Calu3 (cell line): ENCODE measurements at regions of chr1 and their contacts with region 1.

Region 1: DNA sequence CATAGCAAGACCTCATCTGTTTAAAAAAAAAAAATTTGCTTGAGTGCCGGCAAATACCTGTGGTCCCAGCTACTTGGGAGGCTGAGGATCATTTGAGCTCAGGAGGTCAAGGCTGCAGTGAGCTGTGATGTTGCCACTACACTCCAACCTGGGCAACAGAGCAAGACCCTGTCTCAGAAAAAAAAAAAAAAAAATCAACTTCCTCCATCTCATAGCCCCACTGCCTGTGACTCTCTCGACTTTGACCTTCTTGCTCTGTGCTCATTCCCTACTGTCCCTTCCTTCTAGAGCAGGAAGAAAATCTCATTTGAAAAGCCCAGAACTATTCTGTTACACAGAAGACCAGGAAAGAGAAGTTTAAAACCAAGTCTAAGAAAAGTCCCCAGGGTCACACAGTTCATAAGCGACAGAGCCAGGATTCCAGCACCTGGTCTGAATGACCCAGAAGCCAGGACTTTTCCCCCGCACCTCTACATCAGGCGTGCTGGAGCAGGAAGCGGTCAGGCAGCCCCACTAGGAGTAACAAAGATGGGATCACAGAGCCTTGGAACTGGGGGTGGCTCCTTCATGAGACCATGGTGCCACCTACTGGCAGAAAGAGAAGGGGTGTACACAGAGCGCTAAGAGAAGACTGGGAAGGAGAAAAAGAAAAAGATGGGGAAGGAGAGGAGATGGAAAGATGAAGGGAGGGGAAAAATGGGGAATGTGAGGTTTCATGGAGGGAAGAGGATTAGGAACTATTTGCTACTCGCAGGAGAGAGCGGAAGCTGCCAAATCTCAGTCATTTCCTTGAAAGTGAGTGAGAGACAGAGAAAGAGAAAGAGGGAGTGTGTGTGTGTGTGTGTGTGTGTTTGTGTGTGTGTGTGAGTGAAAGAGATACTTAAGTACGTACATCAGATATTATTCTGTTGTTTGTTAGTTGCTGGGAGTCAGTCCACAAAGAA is 3.1 kb upstream of the P3R3URF start:
- DNase-seq: peak; percentile 88
- H3K4me3 Mint-ChIP-seq: no peak overlapping the region
- H3K27ac Mint-ChIP-seq: no peak overlapping the region
- H3K4me1 Mint-ChIP-seq: peaks cover 6% of the 10 kb centered on the region
- H3K27me3 Mint-ChIP-seq: no peaks in the 10 kb centered on the region
- CTCF ChIP-seq: peak; percentile 85

Region 2: GRCh38 chr1:45892068-45892785 is 287.2 kb before region 1 on chr1:
- CTCF ChIA-PET with region 1: interaction called, 3 read pairs
- intact Hi-C with region 1: loop called (anchors 5 kb)
- DNase-seq: peak; percentile 33
- H3K4me3 Mint-ChIP-seq: no peak overlapping the region
- H3K27ac Mint-ChIP-seq: peak overlapping the region; percentile 91
- H3K4me1 Mint-ChIP-seq: peaks cover 25% of the 10 kb centered on the region
- H3K27me3 Mint-ChIP-seq: no peaks in the 10 kb centered on the region
- CTCF ChIP-seq: no peak

Region 3: GRCh38 chr1:46036894-46037839 is 142.2 kb before region 1 on chr1:
- CTCF ChIA-PET with region 1: interaction called, 3 read pairs
- intact Hi-C with region 1: loop called (anchors 1 kb)
- DNase-seq: peak; percentile 90
- H3K4me3 Mint-ChIP-seq: no peak overlapping the region
- H3K27ac Mint-ChIP-seq: no peak overlapping the region
- H3K4me1 Mint-ChIP-seq: no peaks in the 10 kb centered on the region
- H3K27me3 Mint-ChIP-seq: no peaks in the 10 kb centered on the region
- CTCF ChIP-seq: peak; percentile 95

Region 4: DNA sequence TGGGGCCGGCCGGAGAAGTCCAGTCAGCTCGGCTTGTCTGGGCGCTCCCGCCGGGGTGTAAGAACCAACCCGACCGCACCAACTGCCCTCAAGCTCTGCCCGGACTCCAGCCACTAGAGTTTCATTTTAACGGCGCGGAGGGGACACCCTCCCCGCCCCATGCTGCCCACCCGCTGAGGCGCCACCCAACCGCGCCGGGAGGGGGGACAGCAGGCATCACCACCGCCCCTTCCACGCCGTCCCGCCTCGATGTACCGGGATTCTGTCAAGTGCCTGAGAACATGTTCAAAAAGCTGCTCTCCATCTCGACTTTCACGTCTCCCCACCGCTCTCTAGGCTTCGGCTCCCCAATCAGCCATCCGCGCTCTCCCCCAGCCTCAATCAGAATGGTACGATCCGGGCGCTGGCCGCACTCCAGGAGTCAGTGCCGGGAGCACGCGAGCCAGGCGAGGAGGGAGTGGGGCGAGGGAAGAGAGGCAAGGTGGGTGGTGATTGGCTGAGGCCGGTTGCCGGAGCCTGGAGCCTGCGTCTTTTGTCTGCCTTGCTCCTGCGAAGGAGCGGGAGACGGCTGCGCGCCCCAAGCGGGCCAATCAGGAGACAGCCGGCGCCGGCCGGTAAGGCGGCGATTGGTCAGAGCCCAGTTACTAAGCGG is 46.8 kb before region 1 on chr1 and contains the start of gene PIK3R3:
- CTCF ChIA-PET with region 1: interaction called, 6 read pairs
- intact Hi-C with region 1: loop called (anchors 2 kb)
- DNase-seq: peak; percentile 98
- H3K4me3 Mint-ChIP-seq: peak within 1 kb of the TSS; percentile 86
- H3K27ac Mint-ChIP-seq: peak within 1 kb of the TSS; percentile 99
- H3K4me1 Mint-ChIP-seq: peaks cover 59% of the 10 kb centered on the region
- H3K27me3 Mint-ChIP-seq: no peaks in the 10 kb centered on the region
- CTCF ChIP-seq: no peak
- total RNA-seq, gene PIK3R3: 17.4 and 21.4 TPM in 2 replicates

Region 5: DNA sequence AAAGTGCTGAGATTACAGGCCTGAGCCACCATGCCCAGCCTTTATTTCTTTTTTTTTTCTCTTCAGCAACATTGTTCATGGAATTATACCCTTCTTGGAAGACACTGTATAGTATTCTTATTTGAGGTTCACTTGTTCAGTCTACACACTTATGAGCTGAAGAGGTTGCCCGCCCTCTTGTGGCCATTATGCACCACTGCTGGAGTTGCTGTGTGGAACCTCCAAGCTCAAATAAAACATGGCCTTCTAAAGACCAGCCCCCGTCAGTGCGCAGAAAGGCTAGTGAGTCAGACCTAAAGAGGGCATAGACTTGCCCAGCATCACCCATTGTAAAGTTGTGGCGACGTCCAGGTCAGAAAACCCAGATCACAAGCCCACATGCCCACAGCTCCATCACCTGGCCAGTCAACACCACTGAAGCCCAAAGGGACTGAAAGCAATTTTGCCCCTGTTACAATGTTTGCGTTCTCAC is 44.1 kb after region 1 on chr1:
- CTCF ChIA-PET with region 1: interaction called, 56 read pairs
- intact Hi-C with region 1: loop called (anchors 1 kb)
- DNase-seq: peak; percentile 72
- H3K4me3 Mint-ChIP-seq: no peak overlapping the region
- H3K27ac Mint-ChIP-seq: no peak overlapping the region
- H3K4me1 Mint-ChIP-seq: peaks cover 20% of the 10 kb centered on the region
- H3K27me3 Mint-ChIP-seq: no peaks in the 10 kb centered on the region
- CTCF ChIP-seq: peak; percentile 94

Region 6: GRCh38 chr1:46340404-46341221 is 161.2 kb after region 1 on chr1 and contains the start of gene NSUN4:
- CTCF ChIA-PET with region 1: no interaction called
- intact Hi-C with region 1: loop called (anchors 5 kb)
- DNase-seq: peak; percentile 90
- H3K4me3 Mint-ChIP-seq: peak within 1 kb of the TSS; percentile 85
- H3K27ac Mint-ChIP-seq: peak within 1 kb of the TSS; percentile 94
- H3K4me1 Mint-ChIP-seq: peaks cover 39% of the 10 kb centered on the region
- H3K27me3 Mint-ChIP-seq: no peaks in the 10 kb centered on the region
- CTCF ChIP-seq: peak; percentile 74
- total RNA-seq, gene NSUN4: 38.7 and 42.5 TPM in 2 replicates